ENCODE measurements at regions of chr2 and their contacts with region 1.

Region 1: GRCh38 chr2:109128048-109128465 is 948 bp upstream of the SH3RF3 start:
- DNase-seq: peak; percentile 63 to 67 (median 66)
- ATAC-seq: peak; percentile 70
- H3K4me3 ChIP-seq: peak overlapping the region in 1 of 2 donors; percentile 13
- H3K27ac ChIP-seq: peak overlapping the region in 3 of 4 donors; percentile 33 to 69 (median 60)
- H3K4me1 ChIP-seq: peaks cover 22% of the 10 kb centered on the region
- H3K27me3 ChIP-seq: no peaks in the 10 kb centered on the region
- CTCF ChIP-seq: peak; percentile 51 to 82 (median 66)
- POLR2A ChIP-seq: no peak

Region 2: DNA sequence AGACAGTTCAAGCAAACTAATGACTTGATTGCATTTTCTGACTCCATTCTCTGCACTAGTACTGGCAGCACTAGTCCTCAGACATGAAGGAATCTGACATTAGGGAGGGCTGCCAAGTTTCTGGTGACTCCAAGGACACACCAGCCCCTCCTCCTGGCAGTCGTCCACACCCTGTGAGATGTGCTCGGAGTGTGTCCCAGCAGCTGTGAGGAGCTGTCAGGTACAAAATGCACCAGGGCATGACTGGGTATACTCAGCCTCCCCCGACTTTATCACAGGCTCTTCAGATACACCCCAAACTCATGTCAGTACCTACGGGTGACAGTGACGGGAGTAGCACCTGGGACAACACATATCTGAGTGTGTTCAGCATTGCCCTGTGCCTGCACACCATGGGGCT is 182.1 kb before region 1 on chr2:
- intact Hi-C with region 1: no loop called
- DNase-seq: peak; percentile 46 to 71 (median 64)
- ATAC-seq: peak; percentile 62
- H3K4me3 ChIP-seq: no peak overlapping the region
- H3K27ac ChIP-seq: no peak overlapping the region
- H3K4me1 ChIP-seq: peaks cover 4% of the 10 kb centered on the region
- H3K27me3 ChIP-seq: no peaks in the 10 kb centered on the region
- CTCF ChIP-seq: no peak
- POLR2A ChIP-seq: no peak

Region 3: DNA sequence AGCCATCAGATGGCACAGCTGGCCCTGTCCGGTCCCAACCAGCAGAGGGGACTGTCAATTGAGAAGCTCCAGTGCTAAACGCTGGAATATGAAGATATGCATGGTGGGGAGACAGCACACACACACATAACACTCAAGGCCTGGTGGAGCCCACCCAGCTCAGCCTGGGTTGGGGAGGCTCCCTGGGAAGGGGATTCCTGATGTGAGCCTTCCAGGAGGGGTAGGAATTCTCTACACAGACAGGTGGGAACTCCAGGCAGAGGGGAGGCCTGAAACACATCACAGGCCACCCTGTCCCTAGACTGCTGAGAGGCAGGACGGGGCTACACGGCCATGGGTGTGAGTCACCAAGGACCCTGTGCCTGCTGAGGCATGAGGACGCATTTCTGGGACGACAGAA is 48.5 kb before region 1 on chr2:
- intact Hi-C with region 1: no loop called
- DNase-seq: no peak
- ATAC-seq: no peak
- H3K4me3 ChIP-seq: no peak overlapping the region
- H3K27ac ChIP-seq: no peak overlapping the region
- H3K4me1 ChIP-seq: no peaks in the 10 kb centered on the region
- H3K27me3 ChIP-seq: no peaks in the 10 kb centered on the region
- CTCF ChIP-seq: no peak
- POLR2A ChIP-seq: no peak

Region 4: DNA sequence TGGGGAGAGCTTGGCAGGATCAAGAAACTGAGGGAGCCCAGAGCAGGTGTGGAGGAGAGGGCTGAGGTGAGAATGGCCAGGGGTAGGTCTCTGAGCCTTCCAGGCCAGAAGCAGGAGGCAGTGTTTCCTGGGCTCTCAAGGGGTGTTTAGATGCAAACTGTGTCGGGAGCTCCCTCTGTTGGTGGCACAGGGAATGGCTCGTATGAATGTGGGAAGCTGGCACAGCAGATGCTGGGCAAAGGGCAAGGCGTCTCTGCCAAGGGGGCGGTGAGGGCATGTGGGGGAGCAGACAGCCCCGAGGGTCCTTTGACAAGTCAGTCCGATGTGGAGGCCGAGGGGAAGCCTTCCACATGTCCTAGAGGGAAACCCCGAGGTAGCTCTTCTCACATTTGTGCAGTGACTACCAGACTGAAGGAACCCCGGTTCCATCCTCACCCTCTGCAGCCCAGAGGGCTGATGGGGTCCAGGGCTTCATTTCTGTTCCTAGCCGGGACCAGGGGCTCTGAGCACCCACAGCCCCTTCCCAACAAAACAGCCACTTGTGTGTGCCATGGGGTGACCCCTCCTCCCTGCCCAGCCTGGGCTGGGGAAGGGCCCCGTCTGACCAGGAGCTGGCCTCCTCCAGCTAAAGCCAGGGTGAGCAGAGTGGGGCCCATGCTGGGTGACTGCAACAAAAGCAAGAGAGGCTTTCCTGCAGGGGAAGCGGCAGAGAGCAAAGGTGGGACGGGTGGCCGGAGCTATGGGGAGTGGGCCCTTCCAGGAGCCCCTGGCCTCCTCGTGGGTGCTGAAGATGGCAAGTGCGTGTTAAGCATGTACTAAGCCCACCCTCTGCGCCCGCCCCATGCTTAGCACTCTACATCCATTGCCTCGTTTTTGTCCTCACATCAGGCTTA is 382.3 kb after region 1 on chr2:
- intact Hi-C with region 1: loop called (anchors 5 kb)
- DNase-seq: peak; percentile 78 to 86 (median 80)
- ATAC-seq: peak; percentile 73
- H3K4me3 ChIP-seq: no peak overlapping the region
- H3K27ac ChIP-seq: no peak overlapping the region
- H3K4me1 ChIP-seq: no peaks in the 10 kb centered on the region
- H3K27me3 ChIP-seq: no peaks in the 10 kb centered on the region
- CTCF ChIP-seq: peak; percentile 76 to 93 (median 85)
- POLR2A ChIP-seq: no peak

Measured in body of pancreas (tissue), 4 donors.